Activated CD4-positive, alpha-beta T cell treated with anti-CD3 and anti-CD28 coated beads for 36 hours (primary cell): ENCODE measurements at regions of chr19 and their contacts with region 1.

Region 1: GRCh38 chr19:40750059-40750873 is at the start of gene ACTMAP:
- DNase-seq: peak; percentile 100
- ATAC-seq: peak; percentile 90
- H3K4me3 Mint-ChIP-seq: peak within 1 kb of the TSS; percentile 81
- H3K27ac Mint-ChIP-seq: peak within 1 kb of the TSS; percentile 99
- H3K4me1 Mint-ChIP-seq: peaks cover 34% of the 10 kb centered on the region
- H3K27me3 Mint-ChIP-seq: no peaks in the 10 kb centered on the region
- total RNA-seq, gene ACTMAP: 15.0 to 18.0 TPM

Region 2: DNA sequence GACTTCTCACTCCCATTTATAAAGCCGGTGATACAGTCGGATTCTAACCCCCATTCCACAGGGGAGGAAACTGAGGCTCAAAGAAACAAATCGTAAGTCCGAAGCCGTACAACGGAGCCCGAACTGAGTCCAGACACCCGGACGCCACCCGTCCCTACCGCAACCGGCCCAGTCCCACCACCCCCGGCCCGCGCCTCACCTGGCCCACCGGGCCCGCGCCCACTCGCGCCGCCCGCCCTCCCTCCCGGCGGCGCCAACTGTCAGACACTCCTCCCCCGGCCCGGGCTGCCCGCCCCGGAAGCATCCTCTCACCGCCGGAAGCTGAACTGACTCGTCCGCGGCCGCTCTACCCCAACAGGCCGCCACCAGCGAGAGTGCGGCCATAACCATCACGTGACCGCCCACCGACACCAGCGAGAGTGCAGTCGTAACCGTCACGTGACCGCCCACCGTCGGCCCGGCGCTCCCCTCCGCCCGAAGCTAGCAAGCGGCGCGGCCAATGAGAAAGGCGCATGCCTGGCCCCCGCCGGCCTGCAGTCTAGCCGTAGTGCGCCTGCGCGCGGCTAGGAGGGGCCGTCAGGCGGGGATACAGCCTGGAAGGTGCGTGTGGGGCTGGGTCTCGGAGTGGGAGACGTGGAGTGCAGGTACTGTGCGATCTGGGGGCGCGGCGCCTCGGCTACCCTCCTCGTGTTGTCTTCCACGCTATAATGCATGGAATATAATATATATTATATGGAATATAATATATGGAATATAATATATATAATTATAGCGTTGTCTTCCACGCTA is 401.9 kb before region 1 on chr19 and contains the starts of genes C19orf47 and PLD3:
- CTCF ChIA-PET with region 1: no interaction called
- POLR2A ChIA-PET with region 1: no interaction called
- intact Hi-C with region 1: loop called in 1 of 2 experiments (anchors 2 kb)
- DNase-seq: peak; percentile 100
- ATAC-seq: peak; percentile 97
- H3K4me3 Mint-ChIP-seq: peak within 1 kb of the TSS; percentile 96
- H3K27ac Mint-ChIP-seq: peak within 1 kb of the TSS; percentile 91
- H3K4me1 Mint-ChIP-seq: peaks cover 26% of the 10 kb centered on the region
- H3K27me3 Mint-ChIP-seq: no peaks in the 10 kb centered on the region
- total RNA-seq, gene C19orf47: 15.8 to 17.7 TPM
- total RNA-seq, gene PLD3: 57.8 to 69.1 TPM

Region 3: DNA sequence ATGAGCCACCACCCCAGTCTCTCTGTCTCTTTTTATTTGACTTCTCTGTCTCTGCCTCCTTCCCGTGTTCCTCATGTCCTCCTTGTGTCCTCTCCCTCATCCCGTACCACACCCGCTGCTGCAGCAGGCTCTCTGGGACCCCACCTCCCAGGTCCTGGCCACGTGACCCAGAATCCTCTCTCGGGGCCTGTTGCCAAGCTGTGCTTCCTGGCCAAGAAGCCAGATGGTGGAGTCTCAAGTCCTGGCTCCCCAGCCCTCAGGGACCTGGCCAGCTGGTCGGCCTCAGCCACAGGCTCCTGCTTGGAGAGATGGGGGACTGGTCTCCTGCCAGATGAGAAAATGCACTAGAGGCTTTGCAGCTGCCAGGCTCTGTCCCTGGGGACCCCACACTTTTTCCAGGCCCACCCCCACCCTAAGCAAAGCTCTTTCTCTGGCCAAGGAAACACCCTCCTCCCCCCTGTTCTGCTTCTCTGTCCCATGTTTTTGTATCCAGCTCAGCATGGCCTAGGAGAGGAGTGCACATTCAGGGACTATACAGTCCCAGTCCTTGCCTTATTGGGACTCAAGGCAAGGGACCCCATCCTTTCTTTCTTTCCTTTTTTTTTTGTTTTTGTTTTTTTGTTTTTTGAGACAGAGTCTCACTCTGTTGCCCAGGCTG is 207.9 kb before region 1 on chr19:
- CTCF ChIA-PET with region 1: no interaction called
- POLR2A ChIA-PET with region 1: no interaction called
- intact Hi-C with region 1: no loop called
- DNase-seq: no peak
- ATAC-seq: no peak
- H3K4me3 Mint-ChIP-seq: no peak overlapping the region
- H3K27ac Mint-ChIP-seq: no peak overlapping the region
- H3K4me1 Mint-ChIP-seq: no peaks in the 10 kb centered on the region
- H3K27me3 Mint-ChIP-seq: peaks cover 6% of the 10 kb centered on the region

Region 4: DNA sequence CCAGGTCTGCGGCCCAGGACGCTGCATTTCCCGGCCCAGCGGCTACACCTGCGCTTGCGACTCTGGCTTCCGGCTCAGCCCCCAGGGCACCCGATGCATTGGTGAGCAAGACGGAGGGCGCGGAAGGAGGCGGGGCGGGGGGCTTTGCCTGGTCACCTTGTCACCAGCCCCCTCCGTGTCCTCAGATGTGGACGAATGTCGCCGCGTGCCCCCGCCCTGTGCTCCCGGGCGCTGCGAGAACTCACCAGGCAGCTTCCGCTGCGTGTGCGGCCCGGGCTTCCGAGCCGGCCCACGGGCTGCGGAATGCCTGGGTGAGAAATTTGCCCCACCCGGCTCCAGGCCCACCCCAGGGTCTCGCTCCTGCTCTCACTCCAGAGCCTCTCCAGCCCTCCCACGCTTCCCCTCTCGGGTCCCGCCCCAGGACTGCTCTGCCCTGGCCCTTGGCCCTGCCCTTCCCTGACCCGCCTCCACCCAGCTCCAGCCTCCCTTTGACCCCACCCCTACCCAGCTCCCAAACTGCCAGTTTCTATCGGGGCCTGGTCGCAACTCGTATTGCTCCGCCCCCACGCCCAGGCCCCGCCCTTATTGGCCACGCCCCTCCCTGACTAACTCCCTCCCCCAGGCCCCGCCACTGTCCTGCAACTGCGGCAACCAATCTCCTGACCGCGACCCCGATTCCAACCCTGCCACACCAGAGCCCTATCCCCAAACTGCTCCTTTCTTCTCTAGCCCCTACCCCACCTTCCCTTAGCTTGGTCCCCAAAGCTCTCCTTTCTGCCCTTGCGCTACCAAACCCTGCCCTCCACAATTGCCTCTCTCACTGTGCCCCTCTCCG is 140.5 kb before region 1 on chr19:
- CTCF ChIA-PET with region 1: no interaction called
- POLR2A ChIA-PET with region 1: interaction called, 6 read pairs
- intact Hi-C with region 1: loop called in 1 of 2 experiments (anchors 1 kb)
- DNase-seq: peak; percentile 97
- ATAC-seq: peak; percentile 54
- H3K4me3 Mint-ChIP-seq: peak overlapping the region; percentile 69
- H3K27ac Mint-ChIP-seq: peak overlapping the region; percentile 97
- H3K4me1 Mint-ChIP-seq: peaks cover 63% of the 10 kb centered on the region
- H3K27me3 Mint-ChIP-seq: no peaks in the 10 kb centered on the region

Region 5: DNA sequence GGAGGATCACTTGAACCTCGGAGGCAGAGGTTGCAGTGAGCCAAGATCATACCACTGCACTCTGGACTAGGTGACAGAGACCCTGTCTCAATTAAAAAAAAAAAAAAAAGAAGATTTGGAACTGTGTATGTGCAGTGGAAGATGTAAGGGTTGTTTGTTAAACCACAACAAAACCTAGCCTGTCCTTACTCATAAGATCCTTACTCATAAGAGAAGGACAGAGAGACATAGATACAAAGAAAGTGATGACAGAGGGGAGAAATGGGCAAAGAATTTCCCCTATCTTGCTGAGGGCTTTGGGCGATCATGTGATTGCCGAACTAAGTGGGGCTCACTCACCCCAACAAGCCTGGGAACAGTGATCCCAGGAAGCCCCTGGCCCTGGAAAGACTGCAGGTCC is 25.4 kb before region 1 on chr19:
- CTCF ChIA-PET with region 1: interaction called, 4 read pairs
- POLR2A ChIA-PET with region 1: interaction called, 7 read pairs
- intact Hi-C with region 1: loop called in 1 of 2 experiments (anchors 2 kb)
- DNase-seq: peak; percentile 29
- ATAC-seq: peak; percentile 93
- H3K4me3 Mint-ChIP-seq: no peak overlapping the region
- H3K27ac Mint-ChIP-seq: peak overlapping the region; percentile 78
- H3K4me1 Mint-ChIP-seq: peaks cover 38% of the 10 kb centered on the region
- H3K27me3 Mint-ChIP-seq: no peaks in the 10 kb centered on the region

Region 6: GRCh38 chr19:40798223-40798996 is 48.1 kb after region 1 on chr19:
- CTCF ChIA-PET with region 1: interaction called, 7 read pairs
- POLR2A ChIA-PET with region 1: interaction called, 10 read pairs
- intact Hi-C with region 1: loop called (anchors 1 kb)
- DNase-seq: peak; percentile 100
- ATAC-seq: peak; percentile 82
- H3K4me3 Mint-ChIP-seq: peak overlapping the region; percentile 91
- H3K27ac Mint-ChIP-seq: peak overlapping the region; percentile 97
- H3K4me1 Mint-ChIP-seq: peaks cover 49% of the 10 kb centered on the region
- H3K27me3 Mint-ChIP-seq: no peaks in the 10 kb centered on the region

Region 7: GRCh38 chr19:41353466-41354342 is 603.4 kb after region 1 on chr19 and contains the start of gene TGFB1:
- CTCF ChIA-PET with region 1: no interaction called
- POLR2A ChIA-PET with region 1: interaction called, 5 read pairs
- intact Hi-C with region 1: loop called in 1 of 2 experiments (anchors 2 kb)
- DNase-seq: peak; percentile 96
- ATAC-seq: peak; percentile 45
- H3K4me3 Mint-ChIP-seq: peak within 1 kb of the TSS; percentile 96
- H3K27ac Mint-ChIP-seq: peak within 1 kb of the TSS; percentile 97
- H3K4me1 Mint-ChIP-seq: peaks cover 58% of the 10 kb centered on the region
- H3K27me3 Mint-ChIP-seq: no peaks in the 10 kb centered on the region
- total RNA-seq, gene TGFB1: 86.2 to 99.0 TPM